T-cell (primary cell): ENCODE measurements at regions of chr4 and their contacts with region 1.

Region 1: DNA sequence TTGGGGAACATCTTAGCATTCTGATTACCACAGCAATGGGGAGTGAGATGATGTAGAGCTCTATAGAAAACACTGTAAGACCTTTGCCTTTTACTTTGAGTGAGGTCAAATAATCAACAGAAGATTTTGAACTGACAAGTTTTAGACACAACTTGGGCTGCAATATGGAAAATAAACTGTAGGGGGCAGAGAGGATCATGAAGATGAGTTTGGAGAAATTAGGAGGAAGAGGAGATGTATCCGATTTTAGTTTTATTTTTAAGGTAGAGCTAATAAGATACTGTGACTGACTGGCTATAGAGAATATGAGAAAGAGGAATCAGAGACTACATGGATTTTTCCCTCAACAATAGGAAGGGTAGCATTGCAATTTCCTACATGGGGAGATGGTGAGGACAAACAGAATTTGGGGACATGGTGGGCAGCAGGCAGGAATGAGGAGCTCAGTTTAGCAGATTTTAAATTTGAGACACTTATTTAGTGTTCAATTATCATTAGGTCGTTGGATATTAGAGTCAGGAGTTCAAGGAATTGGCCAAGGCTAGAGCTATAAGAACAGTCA is 563.1 kb downstream of the INPP4B start:
- DNase-seq: peak in 10 of 35 experiments; percentile 2 to 60 (median 22)
- ATAC-seq: peak in 3 of 4 experiments; percentile 37 to 46 (median 44)
- H3K4me3 ChIP-seq: no peak overlapping the region
- H3K4me3 Mint-ChIP-seq: no peak overlapping the region
- H3K27ac ChIP-seq: no peak overlapping the region
- H3K27ac Mint-ChIP-seq: no peak overlapping the region
- H3K4me1 ChIP-seq: peaks cover 3 to 5% of the 10 kb centered on the region in 2 experiments
- H3K4me1 Mint-ChIP-seq: peaks cover 16 to 18% (median 17%) of the 10 kb centered on the region in 3 donors
- H3K27me3 ChIP-seq: no peaks in the 10 kb centered on the region
- H3K27me3 Mint-ChIP-seq: no peaks in the 10 kb centered on the region

Region 2: DNA sequence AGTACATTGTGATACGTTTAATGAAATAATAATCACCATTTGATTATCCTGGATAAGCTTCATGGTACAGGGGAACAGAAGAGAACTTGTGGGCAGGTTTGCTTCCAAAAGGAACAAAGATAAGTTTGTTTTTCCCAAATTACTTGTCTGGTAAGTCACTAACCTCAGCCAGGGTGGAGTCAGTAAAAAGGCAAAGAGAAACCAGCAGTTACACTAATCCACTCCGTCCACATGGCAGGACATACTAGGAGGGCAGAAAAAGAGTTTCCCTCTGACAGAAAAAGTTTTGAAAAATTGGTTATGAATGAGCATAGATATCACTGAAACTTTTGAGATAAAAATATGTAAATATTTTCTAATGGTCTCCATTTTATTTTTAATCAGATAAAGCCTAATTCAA is 360.7 kb before region 1 on chr4:
- CTCF ChIA-PET with region 1: no interaction called
- POLR2A ChIA-PET with region 1: no interaction called
- DNase-seq: no peak
- ATAC-seq: no peak
- H3K4me3 ChIP-seq: no peak overlapping the region
- H3K4me3 Mint-ChIP-seq: no peak overlapping the region
- H3K27ac ChIP-seq: no peak overlapping the region
- H3K27ac Mint-ChIP-seq: no peak overlapping the region
- H3K4me1 ChIP-seq: no peaks in the 10 kb centered on the region
- H3K4me1 Mint-ChIP-seq: no peaks in the 10 kb centered on the region
- H3K27me3 ChIP-seq: no peaks in the 10 kb centered on the region
- H3K27me3 Mint-ChIP-seq: no peaks in the 10 kb centered on the region

Region 3: DNA sequence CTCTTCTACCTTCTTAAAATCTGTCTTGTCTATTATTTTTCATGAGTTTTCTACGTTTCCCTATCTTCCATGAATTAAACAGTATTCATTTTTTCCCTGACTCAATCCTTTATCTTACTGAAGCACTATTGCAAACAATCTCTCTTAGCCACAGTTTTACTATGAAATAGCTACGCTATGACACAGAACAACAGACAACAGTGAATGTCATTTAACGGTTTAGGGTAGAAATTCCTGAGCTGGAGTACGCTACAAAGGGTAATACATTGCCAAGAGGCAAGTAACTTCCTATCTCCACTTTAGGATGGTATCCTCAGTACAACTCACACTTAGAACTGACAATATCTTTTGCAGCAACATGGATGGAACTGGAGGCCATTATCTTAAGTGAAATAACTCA is 10.6 kb after region 1 on chr4:
- CTCF ChIA-PET with region 1: interaction called, 3 to 31 read pairs
- POLR2A ChIA-PET with region 1: interaction called, 3 read pairs
- DNase-seq: no peak
- ATAC-seq: no peak
- H3K4me3 ChIP-seq: no peak overlapping the region
- H3K4me3 Mint-ChIP-seq: no peak overlapping the region
- H3K27ac ChIP-seq: no peak overlapping the region
- H3K27ac Mint-ChIP-seq: peak overlapping the region; percentile 53 to 55
- H3K4me1 ChIP-seq: no peaks in the 10 kb centered on the region
- H3K4me1 Mint-ChIP-seq: peaks cover 50 to 70% (median 50%) of the 10 kb centered on the region in 3 donors
- H3K27me3 ChIP-seq: no peaks in the 10 kb centered on the region
- H3K27me3 Mint-ChIP-seq: no peaks in the 10 kb centered on the region

Region 4: DNA sequence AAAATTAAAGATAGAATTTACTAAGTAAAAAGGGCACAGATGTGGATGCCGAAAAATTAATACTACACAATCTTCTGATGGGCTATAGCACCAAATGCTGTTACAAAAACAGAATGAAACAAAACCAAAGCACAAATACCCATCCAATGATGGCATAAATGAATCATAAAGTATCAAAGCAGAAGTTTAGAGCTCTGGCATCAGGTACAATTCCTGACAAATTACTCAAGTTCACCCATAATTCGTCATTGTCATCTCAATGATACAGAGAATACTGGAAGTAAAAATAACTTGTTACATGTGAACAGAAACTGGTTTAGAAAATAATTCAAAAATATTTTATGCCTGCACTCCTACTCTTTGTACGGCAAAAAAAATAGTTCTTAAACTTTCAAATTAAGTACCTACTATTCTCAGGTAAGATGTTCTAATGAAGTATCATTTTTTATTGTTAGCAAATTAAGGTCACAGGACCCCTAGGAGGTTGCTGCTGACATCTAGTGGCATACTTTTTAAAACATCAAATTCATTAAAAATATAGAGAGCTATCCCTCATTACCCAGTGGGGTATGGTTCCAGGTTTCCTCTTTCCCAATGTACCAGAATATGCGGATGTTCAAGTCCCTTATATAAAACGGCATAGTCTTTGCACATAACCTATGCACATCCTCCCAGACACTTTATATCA is 437.0 kb after region 1 on chr4:
- CTCF ChIA-PET with region 1: interaction called, 4 to 18 read pairs
- POLR2A ChIA-PET with region 1: no interaction called
- DNase-seq: peak in 2 of 35 experiments; percentile 3 to 65
- ATAC-seq: peak; percentile 62 to 79 (median 72)
- H3K4me3 ChIP-seq: no peak overlapping the region
- H3K4me3 Mint-ChIP-seq: no peak overlapping the region
- H3K27ac ChIP-seq: no peak overlapping the region
- H3K27ac Mint-ChIP-seq: peak overlapping the region; percentile 58 to 73
- H3K4me1 ChIP-seq: peaks cover 0 to 5% of the 10 kb centered on the region in 2 experiments
- H3K4me1 Mint-ChIP-seq: peaks cover 20 to 39% (median 37%) of the 10 kb centered on the region in 3 donors
- H3K27me3 ChIP-seq: no peaks in the 10 kb centered on the region
- H3K27me3 Mint-ChIP-seq: no peaks in the 10 kb centered on the region